ENCODE measurements at regions of chr10 and their contacts with region 1.

Region 1: DNA sequence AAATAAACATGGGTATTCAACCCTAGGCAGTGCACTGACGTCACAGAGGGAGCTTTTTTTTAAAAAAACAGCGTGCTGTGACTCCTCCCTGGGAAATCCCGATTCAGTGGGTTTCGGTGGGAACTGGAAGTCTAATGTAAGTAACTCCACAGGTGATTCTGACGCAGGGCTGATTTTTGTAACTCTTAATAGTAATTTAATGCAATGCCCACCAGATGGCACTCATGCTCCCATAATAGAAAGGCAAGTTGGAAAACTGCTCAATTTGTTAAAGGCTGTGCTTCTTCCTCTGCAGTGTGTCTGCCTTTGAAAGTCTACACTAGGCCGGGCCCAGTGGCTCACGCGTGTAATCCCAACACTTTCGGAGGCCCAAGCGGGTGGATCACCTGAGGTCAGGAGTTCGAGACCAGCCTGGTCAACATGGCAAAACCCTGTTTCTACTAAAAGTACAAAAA is 10.9 kb upstream of the RSU1 start:
- DNase-seq: peak; percentile 50 to 52
- H3K4me3 ChIP-seq: no peak overlapping the region
- H3K27ac ChIP-seq: no peak overlapping the region
- H3K4me1 ChIP-seq: no peaks in the 10 kb centered on the region
- H3K27me3 ChIP-seq: no peaks in the 10 kb centered on the region
- CTCF ChIP-seq: peak; percentile 64

Region 2: DNA sequence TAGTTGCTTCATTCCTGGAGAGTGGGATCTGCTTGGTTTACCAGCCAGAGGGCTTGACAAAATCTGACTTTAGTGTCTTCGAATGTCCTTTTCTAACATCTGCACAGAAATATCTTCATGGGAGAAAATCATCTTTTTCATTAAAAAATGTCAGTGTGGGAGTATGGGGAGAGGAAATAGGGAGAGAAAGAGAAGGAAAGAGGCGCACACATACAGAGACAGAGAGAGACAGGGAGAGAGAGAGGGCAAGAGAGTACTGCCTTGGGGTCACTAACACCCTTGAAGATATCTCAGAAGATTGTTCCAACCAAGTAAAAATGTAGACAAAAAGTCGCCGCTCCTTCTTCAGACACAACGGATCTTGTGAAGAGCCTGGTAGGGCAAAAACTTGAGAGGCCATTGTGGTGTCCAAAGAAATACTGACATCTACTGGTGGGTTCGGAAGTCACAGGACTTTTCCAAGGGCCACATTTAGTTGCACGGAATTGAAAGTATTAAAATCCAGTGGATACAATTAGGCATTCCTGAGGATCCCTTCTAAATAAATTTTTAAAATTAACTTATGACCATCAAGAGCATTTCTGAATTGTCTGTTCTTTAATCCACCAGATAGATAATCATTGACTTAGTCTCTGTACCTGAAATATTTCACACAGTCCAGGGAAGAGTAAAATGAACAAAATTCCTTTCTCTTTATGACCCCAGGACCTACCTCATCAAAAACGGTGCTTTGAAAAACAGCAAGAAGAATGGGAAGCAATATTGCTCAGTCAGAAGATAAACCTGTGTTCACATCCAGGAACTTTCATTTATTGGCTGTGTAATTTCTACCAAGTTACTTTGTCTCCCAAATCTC is 429.6 kb after region 1 on chr10:
- CTCF ChIA-PET with region 1: interaction called, 6 read pairs
- POLR2A ChIA-PET with region 1: no interaction called
- intact Hi-C with region 1: loop called (anchors 1 kb)
- DNase-seq: peak in 1 of 2 experiments; percentile 47
- H3K4me3 ChIP-seq: no peak overlapping the region
- H3K27ac ChIP-seq: no peak overlapping the region
- H3K4me1 ChIP-seq: no peaks in the 10 kb centered on the region
- H3K27me3 ChIP-seq: no peaks in the 10 kb centered on the region
- CTCF ChIP-seq: peak; percentile 75

Region 3: GRCh38 chr10:17430647-17431355 is 602.7 kb after region 1 on chr10:
- CTCF ChIA-PET with region 1: no interaction called
- POLR2A ChIA-PET with region 1: no interaction called
- intact Hi-C with region 1: loop called (anchors 1 kb)
- DNase-seq: peak in 1 of 2 experiments; percentile 67
- H3K4me3 ChIP-seq: no peak overlapping the region
- H3K27ac ChIP-seq: no peak overlapping the region
- H3K4me1 ChIP-seq: no peaks in the 10 kb centered on the region
- H3K27me3 ChIP-seq: no peaks in the 10 kb centered on the region
- CTCF ChIP-seq: peak; percentile 84

Region 4: DNA sequence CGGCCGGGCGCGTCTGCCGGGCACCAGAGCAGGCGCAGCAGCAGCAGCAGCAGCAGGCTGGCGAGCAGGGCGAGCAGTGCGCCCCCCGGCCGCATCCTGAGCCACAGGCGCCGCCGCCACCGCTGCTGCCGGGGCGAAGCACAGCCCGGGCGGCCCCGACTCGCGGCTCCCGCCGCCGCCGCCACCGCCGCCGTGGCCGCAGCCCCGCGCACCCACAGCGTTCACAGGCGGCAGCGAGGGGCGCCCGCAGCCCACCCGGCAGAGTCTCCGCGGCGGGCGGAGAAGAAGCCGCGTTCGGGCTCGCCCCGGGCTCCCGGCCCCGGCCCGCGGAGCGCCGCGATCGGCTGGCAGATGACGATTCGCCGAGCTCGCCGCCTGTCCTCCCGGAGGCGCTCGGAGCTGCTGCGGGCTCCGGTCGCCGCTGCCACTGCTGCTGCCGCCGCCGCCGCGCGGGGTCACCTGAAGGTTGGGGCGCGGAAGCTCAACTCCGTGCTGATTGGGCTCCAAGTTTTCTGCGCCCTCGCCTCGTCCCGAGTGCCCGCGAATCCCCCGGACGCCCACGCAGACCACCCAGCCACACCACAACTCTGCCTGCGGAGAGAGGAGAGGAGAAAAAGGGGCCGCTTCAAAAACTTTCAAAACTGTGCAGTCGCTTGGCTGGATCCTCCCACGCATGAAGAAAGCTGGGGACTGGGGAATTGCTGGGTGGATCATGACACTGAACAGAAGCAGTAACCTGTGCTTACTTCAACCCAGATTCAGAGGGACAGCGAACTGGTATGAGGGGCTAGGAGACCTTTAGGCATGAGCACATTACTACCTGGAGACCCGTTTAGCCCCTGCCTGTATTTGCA is 626.2 kb after region 1 on chr10 and contains the start of gene ST8SIA6:
- CTCF ChIA-PET with region 1: no interaction called
- POLR2A ChIA-PET with region 1: no interaction called
- intact Hi-C with region 1: loop called (anchors 10 kb)
- DNase-seq: peak in 1 of 2 experiments; percentile 52
- H3K4me3 ChIP-seq: peak within 1 kb of the TSS; percentile 57
- H3K27ac ChIP-seq: no peak within 1 kb of the TSS
- H3K4me1 ChIP-seq: no peaks in the 10 kb centered on the region
- H3K27me3 ChIP-seq: no peaks in the 10 kb centered on the region
- CTCF ChIP-seq: no peak
- total RNA-seq, gene ST8SIA6: 0.60 and 2.1 TPM in 2 replicates

Region 5: GRCh38 chr10:17599089-17599488 is 770.9 kb after region 1 on chr10:
- CTCF ChIA-PET with region 1: no interaction called
- POLR2A ChIA-PET with region 1: no interaction called
- intact Hi-C with region 1: loop called (anchors 10 kb)
- DNase-seq: peak in 1 of 2 experiments; percentile 10
- H3K4me3 ChIP-seq: no peak overlapping the region
- H3K27ac ChIP-seq: no peak overlapping the region
- H3K4me1 ChIP-seq: no peaks in the 10 kb centered on the region
- H3K27me3 ChIP-seq: no peaks in the 10 kb centered on the region
- CTCF ChIP-seq: 0 out of 2 replicates have a peak, but pooled peaks have one; percentile 32

Region 6: DNA sequence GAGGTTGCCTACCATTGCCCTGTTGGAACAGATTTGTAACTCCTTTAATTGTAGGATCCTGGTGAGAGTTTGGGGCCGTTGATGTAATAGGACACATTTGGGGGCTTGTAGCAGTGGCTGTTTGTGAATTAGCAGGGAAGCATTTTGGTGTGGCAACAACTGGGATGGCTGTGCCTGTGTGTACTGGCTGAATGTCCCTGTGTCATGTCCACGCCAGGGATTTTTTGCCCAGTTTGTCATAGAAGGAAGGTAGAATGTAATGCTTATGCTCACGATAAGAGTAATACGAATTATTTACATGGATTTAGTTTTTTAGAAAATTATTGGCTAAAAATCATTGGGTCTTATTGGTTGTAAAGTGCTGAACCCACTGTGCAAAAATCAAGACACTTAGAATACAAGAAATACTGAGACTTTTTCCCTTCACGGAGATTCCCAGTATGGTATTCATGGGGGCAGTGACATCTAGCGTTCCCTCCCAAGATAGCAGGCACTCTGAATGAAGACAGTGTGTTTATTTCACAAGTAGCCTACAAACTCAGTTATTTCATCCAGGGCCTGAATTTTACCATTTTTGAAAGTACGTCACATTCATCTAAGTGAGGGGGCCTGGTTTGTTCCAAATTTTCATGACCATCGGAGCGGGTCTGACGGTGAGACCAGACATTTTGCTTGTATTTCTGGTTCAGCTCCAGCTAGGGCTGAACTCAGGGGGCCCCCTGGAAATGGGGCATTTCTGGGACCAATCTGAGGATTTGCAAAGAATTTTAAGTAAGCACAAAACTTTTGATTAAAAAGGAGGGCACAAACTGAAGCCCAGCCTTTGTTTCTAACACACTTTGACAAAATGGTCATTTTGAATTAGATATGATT is 1386.8 kb after region 1 on chr10:
- CTCF ChIA-PET with region 1: no interaction called
- POLR2A ChIA-PET with region 1: no interaction called
- intact Hi-C with region 1: loop called (anchors 5 kb)
- DNase-seq: peak in 1 of 2 experiments; percentile 45
- H3K4me3 ChIP-seq: no peak overlapping the region
- H3K27ac ChIP-seq: no peak overlapping the region
- H3K4me1 ChIP-seq: no peaks in the 10 kb centered on the region
- H3K27me3 ChIP-seq: no peaks in the 10 kb centered on the region
- CTCF ChIP-seq: peak; percentile 72

Measured in PC-9 (cell line).